Activated CD4-positive, alpha-beta memory T cell treated with anti-CD3 and anti-CD28 coated beads, Interleukin-2, amount 10 ng/mL, durations not matched to agents 7 days and 5 days (primary cell): ENCODE measurements at regions of chr1 and their contacts with region 1.

Region 1: GRCh38 chr1:26169669-26170471 is at the start of gene ZNF593:
- DNase-seq: peak; percentile 90
- H3K4me3 Mint-ChIP-seq: peak within 1 kb of the TSS; percentile 83
- H3K27ac Mint-ChIP-seq: peak within 1 kb of the TSS; percentile 70
- H3K4me1 Mint-ChIP-seq: peaks cover 32% of the 10 kb centered on the region
- H3K27me3 Mint-ChIP-seq: no peaks in the 10 kb centered on the region
- total RNA-seq, gene ZNF593: 20.3 to 22.9 TPM

Region 2: DNA sequence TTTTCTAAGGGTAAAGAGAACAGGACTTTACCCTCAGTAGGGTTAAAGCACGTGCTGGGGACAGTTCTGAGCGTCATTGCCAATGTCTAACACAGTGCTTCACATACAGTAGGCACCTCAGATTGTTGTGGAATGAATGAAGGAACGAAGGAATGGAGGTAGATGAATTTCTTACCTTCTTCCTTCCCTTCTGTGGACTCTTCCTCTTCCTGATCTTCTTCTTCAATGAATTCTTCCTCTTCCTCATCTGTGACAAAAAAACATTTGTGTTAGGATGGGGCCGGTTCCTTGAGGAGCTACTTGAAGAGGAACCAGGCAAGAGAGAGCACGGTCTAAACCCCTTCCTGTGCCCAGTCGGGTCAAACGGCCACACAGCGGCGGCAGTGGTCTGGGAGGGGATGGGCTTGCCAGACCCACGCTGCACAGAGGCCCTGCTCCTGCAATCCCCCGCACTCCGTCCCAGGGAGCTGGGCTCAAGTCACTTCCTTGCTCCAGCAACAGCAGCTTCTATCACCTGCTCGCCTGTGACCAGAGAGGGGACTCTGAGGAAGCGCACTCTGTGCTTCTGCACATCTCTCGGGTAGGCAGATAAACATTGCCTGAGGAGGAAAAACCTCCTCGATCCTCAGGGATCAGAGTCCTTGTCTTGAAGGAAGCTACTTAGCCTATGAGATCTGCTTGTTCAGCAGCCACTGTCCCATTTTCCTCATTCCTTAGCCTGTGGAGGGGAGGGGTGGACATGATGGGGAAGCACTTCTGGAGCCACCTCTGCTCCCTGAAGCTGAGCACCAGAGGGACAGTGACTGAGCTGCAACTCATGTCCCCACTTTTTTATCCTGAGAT is 115.9 kb before region 1 on chr1:
- CTCF ChIA-PET with region 1: no interaction called
- POLR2A ChIA-PET with region 1: no interaction called
- DNase-seq: no peak
- H3K4me3 Mint-ChIP-seq: no peak overlapping the region
- H3K27ac Mint-ChIP-seq: no peak overlapping the region
- H3K4me1 Mint-ChIP-seq: peaks cover 5% of the 10 kb centered on the region
- H3K27me3 Mint-ChIP-seq: peaks cover 64% of the 10 kb centered on the region

Region 3: DNA sequence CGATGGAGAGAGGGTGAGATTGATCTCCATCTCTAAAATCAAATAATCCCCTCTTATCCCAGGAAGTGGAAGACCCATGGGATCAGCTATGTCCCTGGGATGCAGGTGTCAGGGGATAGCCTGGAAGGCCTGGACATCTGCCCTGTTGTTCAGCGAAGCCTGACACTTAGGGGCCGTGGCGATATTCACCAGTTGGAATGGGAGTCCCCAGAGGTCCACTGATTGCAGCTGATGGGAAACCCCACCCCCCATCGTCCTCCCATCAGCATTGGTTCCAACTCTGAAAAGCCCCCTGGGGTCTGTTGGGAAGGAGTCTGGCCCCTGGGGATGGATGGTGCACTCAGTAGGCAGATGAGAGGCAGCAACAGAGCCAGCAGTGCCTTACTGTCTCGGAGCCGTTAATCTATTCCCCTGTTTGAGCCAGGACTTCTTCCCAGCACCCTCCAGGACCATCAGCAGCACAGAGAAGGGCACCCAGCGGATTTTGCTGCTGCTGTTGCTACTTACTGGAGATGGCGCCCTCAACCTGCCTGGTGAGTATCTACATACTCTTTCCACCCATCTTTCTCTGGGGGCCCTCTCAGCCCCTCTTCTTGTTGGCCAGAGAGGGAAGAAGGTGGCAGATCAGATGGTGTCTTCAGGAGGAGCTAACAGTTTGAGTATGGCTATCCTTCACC is 33.9 kb after region 1 on chr1:
- CTCF ChIA-PET with region 1: interaction called, 37 read pairs
- POLR2A ChIA-PET with region 1: interaction called, 17 read pairs
- DNase-seq: no peak
- H3K4me3 Mint-ChIP-seq: no peak overlapping the region
- H3K27ac Mint-ChIP-seq: no peak overlapping the region
- H3K4me1 Mint-ChIP-seq: peaks cover 41% of the 10 kb centered on the region
- H3K27me3 Mint-ChIP-seq: no peaks in the 10 kb centered on the region

Region 4: DNA sequence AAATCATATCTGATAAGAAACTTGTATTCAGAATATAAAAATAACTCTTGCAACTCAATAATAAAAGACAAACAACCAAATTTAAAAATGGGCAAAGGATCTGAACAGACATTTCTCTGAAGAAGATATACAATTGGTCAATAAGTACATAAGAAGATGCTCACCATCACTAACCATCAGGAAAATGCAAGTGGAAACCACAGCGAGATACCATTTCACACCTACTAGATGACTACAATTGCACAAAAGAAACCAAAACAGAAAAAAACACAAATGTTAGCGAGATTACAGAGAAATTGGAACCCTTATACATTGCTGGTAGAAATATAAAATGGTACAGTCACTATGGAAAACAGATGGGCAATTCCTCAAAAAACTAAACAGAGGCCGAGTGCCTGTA is 214.2 kb after region 1 on chr1:
- CTCF ChIA-PET with region 1: no interaction called
- POLR2A ChIA-PET with region 1: no interaction called
- DNase-seq: no peak
- H3K4me3 Mint-ChIP-seq: peak overlapping the region; percentile 5
- H3K27ac Mint-ChIP-seq: peak overlapping the region; percentile 53
- H3K4me1 Mint-ChIP-seq: peaks cover 57% of the 10 kb centered on the region
- H3K27me3 Mint-ChIP-seq: no peaks in the 10 kb centered on the region